Motor neuron (in vitro differentiated cells): ENCODE measurements at regions of chr6 and their contacts with region 1.

Region 1: DNA sequence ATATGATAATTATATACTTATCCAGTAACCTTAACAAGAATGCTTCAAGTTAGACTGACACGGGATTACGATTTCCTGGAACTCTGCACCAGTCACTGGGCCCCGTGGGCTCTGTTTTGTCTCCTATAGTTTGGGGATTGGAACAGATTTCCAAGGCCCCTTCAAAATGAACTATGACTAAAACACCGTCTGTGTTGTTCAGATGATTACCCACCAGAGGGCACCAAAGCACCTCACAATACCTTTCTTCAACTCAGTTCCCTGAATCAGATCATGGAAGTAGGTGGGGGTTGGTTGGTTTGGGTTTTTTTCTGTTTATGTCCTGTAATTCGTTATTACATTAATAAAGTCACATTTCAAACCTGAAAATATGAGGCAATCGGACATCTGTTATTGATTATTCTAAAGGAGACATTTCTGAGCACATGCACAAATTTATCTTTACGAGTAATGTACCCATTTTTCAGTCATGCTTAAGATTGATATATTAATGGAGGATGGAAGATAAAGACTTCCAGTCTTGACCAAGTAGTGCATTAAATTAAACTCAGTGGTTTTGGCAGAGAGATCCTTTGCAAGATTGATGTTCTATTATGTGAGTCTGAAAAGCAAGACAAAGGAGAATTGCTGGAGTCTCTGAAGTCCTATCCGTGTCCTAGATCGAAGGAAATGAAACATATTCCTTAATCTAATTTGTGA is 112.0 kb upstream of the COL21A1 start:
- ATAC-seq: peak; percentile 60 to 90 (median 80)
- H3K4me3 ChIP-seq: no peak overlapping the region
- H3K27ac ChIP-seq: no peak overlapping the region
- H3K4me1 ChIP-seq: peaks cover 3 to 7% of the 10 kb centered on the region in 2 donors

Region 2: GRCh38 chr6:56451165-56451739 is 91.9 kb after region 1 on chr6:
- in situ Hi-C with region 1: loop called in 1 of 9 experiments (anchors 25 kb)
- ATAC-seq: peak in 2 of 8 experiments; percentile 22 to 46
- H3K4me3 ChIP-seq: no peak overlapping the region
- H3K27ac ChIP-seq: no peak overlapping the region
- H3K4me1 ChIP-seq: peaks cover 0 to 6% of the 10 kb centered on the region in 2 donors

Region 3: GRCh38 chr6:56542364-56543331 is 183.3 kb after region 1 on chr6:
- in situ Hi-C with region 1: loop called in 1 of 9 experiments (anchors 25 kb)
- ATAC-seq: peak; percentile 92 to 96 (median 94)
- H3K4me3 ChIP-seq: peak overlapping the region; percentile 37 to 56 (median 47)
- H3K27ac ChIP-seq: peak overlapping the region; percentile 71 to 85
- H3K4me1 ChIP-seq: peaks cover 26 to 39% of the 10 kb centered on the region in 2 donors

Region 4: GRCh38 chr6:56570413-56571359 is 211.3 kb after region 1 on chr6:
- in situ Hi-C with region 1: loop called in 5 of 9 experiments (anchors 25 kb)
- ATAC-seq: peak in 6 of 8 experiments; percentile 32 to 84 (median 67)
- H3K4me3 ChIP-seq: no peak overlapping the region
- H3K27ac ChIP-seq: no peak overlapping the region
- H3K4me1 ChIP-seq: peaks cover 0 to 7% of the 10 kb centered on the region in 2 donors

Region 5: GRCh38 chr6:56595490-56596122 is 236.3 kb after region 1 on chr6:
- in situ Hi-C with region 1: loop called in 7 of 9 experiments (anchors 10 to 25 kb)
- ATAC-seq: peak; percentile 54 to 85 (median 68)
- H3K4me3 ChIP-seq: no peak overlapping the region
- H3K27ac ChIP-seq: no peak overlapping the region
- H3K4me1 ChIP-seq: no peaks in the 10 kb centered on the region

Region 6: DNA sequence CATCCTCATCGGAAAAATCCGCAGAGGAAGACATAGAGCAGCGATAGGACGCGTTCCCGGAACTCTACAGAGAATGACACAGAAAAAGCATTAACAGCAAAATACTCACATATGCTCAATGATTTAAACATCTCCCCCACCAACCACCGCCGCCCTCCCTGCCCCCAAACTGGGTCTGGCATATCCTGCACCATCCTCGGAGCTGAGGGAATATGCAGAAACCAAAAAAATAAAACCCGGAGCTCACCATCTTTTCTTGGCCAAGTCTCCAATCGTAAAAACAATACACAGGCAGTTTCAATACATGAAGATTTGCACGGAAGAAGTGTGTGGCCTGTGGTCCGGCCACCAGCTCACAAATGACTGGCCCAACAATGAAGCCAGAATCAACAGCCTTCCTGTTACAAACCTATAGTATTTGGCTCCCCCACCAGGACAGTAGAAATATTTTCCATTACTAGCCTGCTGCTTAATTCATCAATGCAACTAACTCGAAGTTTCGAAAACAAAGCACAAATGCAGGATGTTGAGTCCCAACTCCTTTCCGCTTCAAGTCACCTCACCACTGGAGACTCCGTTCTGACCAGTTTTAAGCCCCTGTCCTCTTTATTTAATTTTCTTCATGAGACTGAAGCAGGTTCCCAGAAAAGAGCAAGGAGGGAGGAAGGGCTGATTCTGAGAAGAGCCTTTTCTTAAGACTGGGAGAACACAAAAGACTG is 492.4 kb after region 1 on chr6:
- in situ Hi-C with region 1: loop called in 2 of 9 experiments (anchors 25 kb)
- ATAC-seq: peak; percentile 66 to 93 (median 90)
- H3K4me3 ChIP-seq: peak overlapping the region; percentile 36 to 47 (median 42)
- H3K27ac ChIP-seq: no peak overlapping the region
- H3K4me1 ChIP-seq: peaks cover 19 to 20% of the 10 kb centered on the region in 2 donors